ENCODE measurements at regions of chr16 and their contacts with region 1.

Region 1: DNA sequence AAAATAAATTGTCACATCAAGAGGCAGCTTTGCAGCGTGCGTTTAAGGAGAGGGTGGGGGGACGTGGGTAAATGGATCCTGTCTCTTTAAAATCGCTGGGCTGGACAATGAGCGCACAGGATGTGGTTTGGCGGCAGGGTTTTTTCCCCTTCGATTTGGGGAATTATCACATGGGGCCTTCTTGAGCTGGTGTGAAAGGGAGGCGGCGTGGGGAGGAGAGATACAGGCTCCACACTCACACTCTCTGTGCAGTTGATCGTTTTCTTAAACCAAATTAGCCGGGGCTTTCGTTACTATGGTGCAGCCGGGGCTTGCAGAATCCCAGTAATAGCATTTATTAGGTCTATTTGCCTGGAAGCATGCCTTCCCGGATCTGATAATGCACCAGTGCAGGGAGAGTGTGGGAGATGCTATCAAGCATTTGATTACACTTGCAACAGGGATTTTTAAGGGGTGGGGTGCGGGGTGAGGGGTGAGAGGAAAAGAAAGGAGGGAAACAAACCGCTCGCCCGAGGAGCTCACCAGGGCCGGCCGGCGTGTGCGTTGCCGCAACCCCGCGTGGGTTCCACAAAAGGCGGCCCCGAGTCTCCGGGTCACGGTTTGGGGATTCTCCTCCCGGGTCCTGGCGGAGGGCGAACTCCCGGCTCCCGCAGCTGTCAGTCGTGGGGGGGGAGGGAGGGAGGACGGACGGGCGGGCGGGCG is 58.9 kb upstream of the GSE1 start:
- DNase-seq: peak; percentile 83
- H3K4me3 ChIP-seq: peak overlapping the region; percentile 65
- H3K27ac ChIP-seq: peak overlapping the region; percentile 95
- H3K4me1 ChIP-seq: peaks cover 6% of the 10 kb centered on the region
- H3K27me3 ChIP-seq: no peaks in the 10 kb centered on the region
- CTCF ChIP-seq: no peak

Region 2: GRCh38 chr16:85420501-85421337 is 133.5 kb before region 1 on chr16:
- intact Hi-C with region 1: loop called (anchors 10 kb)
- DNase-seq: peak; percentile 65
- H3K4me3 ChIP-seq: no peak overlapping the region
- H3K27ac ChIP-seq: no peak overlapping the region
- H3K4me1 ChIP-seq: peaks cover 16% of the 10 kb centered on the region
- H3K27me3 ChIP-seq: no peaks in the 10 kb centered on the region
- CTCF ChIP-seq: peak; percentile 100

Region 3: GRCh38 chr16:85448557-85449197 is 105.6 kb before region 1 on chr16:
- intact Hi-C with region 1: no loop called
- DNase-seq: peak; percentile 85
- H3K4me3 ChIP-seq: no peak overlapping the region
- H3K27ac ChIP-seq: peak overlapping the region; percentile 64
- H3K4me1 ChIP-seq: peaks cover 20% of the 10 kb centered on the region
- H3K27me3 ChIP-seq: no peaks in the 10 kb centered on the region
- CTCF ChIP-seq: no peak